ENCODE measurements at regions of chr20 and their contacts with region 1.

Region 1: GRCh38 chr20:34069341-34070078 is 42.5 kb downstream of the EIF2S2 start:
- DNase-seq: peak; percentile 86 to 91
- H3K4me3 ChIP-seq: no peak overlapping the region
- H3K4me3 Mint-ChIP-seq: no peak overlapping the region
- H3K27ac Mint-ChIP-seq: no peak overlapping the region
- H3K4me1 ChIP-seq: no peaks in the 10 kb centered on the region
- H3K4me1 Mint-ChIP-seq: no peaks in the 10 kb centered on the region
- H3K27me3 ChIP-seq: no peaks in the 10 kb centered on the region
- H3K27me3 Mint-ChIP-seq: no peaks in the 10 kb centered on the region
- CTCF ChIP-seq: peak; percentile 97 to 99

Region 2: GRCh38 chr20:33791959-33792597 is 277.4 kb before region 1 on chr20:
- CTCF ChIA-PET with region 1: interaction called, 7 read pairs
- POLR2A ChIA-PET with region 1: no interaction called
- intact Hi-C with region 1: loop called (anchors 1 kb)
- DNase-seq: peak in 1 of 2 experiments; percentile 77
- H3K4me3 ChIP-seq: no peak overlapping the region
- H3K4me3 Mint-ChIP-seq: no peak overlapping the region
- H3K27ac Mint-ChIP-seq: no peak overlapping the region
- H3K4me1 ChIP-seq: peaks cover 17% of the 10 kb centered on the region
- H3K4me1 Mint-ChIP-seq: peaks cover 18% of the 10 kb centered on the region
- H3K27me3 ChIP-seq: no peaks in the 10 kb centered on the region
- H3K27me3 Mint-ChIP-seq: no peaks in the 10 kb centered on the region
- CTCF ChIP-seq: peak; percentile 90 to 99

Region 3: GRCh38 chr20:33933469-33933909 is 136.0 kb before region 1 on chr20:
- CTCF ChIA-PET with region 1: interaction called, 12 read pairs
- POLR2A ChIA-PET with region 1: no interaction called
- intact Hi-C with region 1: loop called (anchors 1 kb)
- DNase-seq: peak; percentile 81 to 86
- H3K4me3 ChIP-seq: no peak overlapping the region
- H3K4me3 Mint-ChIP-seq: no peak overlapping the region
- H3K27ac Mint-ChIP-seq: no peak overlapping the region
- H3K4me1 ChIP-seq: no peaks in the 10 kb centered on the region
- H3K4me1 Mint-ChIP-seq: no peaks in the 10 kb centered on the region
- H3K27me3 ChIP-seq: no peaks in the 10 kb centered on the region
- H3K27me3 Mint-ChIP-seq: no peaks in the 10 kb centered on the region
- CTCF ChIP-seq: peak; percentile 56 to 88

Region 4: GRCh38 chr20:33984182-33984719 is 85.3 kb before region 1 on chr20:
- CTCF ChIA-PET with region 1: no interaction called
- POLR2A ChIA-PET with region 1: no interaction called
- intact Hi-C with region 1: no loop called
- DNase-seq: no peak
- H3K4me3 ChIP-seq: no peak overlapping the region
- H3K4me3 Mint-ChIP-seq: no peak overlapping the region
- H3K27ac Mint-ChIP-seq: no peak overlapping the region
- H3K4me1 ChIP-seq: no peaks in the 10 kb centered on the region
- H3K4me1 Mint-ChIP-seq: no peaks in the 10 kb centered on the region
- H3K27me3 ChIP-seq: no peaks in the 10 kb centered on the region
- H3K27me3 Mint-ChIP-seq: no peaks in the 10 kb centered on the region
- CTCF ChIP-seq: no peak

Region 5: DNA sequence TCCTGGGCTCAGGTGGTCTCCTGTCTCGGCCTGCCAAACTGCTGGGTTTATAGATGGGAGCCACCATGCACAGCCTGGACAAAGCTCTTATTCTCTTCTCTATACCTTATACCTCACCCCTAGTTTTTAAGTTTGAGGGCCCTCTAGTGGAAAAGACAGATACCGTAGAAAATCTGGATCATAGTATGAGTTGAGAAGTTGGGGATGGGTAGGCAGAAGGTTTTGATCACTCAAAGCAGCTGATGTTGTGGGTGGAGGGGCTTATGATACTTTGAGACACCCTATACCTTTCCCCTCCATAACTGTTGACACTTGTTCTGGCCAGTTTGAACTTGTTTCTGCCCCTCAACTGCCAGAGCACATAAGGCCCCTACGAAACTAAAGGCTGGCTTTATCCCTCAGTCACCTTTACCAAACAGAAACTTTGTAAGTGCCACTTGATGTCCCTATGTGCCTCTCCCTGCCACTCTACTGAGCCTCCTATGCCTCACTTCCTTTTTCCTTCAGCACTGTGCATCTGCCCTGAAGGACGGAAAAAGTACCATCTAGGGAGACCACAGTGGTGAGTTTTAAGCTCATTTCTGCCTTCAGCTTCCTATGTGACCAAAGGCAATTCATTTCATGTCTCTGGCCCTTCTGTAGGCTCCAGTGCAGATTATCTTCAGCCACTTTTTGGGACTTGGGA is 47.2 kb before region 1 on chr20:
- CTCF ChIA-PET with region 1: interaction called, 7 read pairs
- POLR2A ChIA-PET with region 1: no interaction called
- intact Hi-C with region 1: loop called (anchors 2 kb)
- DNase-seq: peak in 1 of 2 experiments; percentile 65
- H3K4me3 ChIP-seq: no peak overlapping the region
- H3K4me3 Mint-ChIP-seq: no peak overlapping the region
- H3K27ac Mint-ChIP-seq: no peak overlapping the region
- H3K4me1 ChIP-seq: no peaks in the 10 kb centered on the region
- H3K4me1 Mint-ChIP-seq: peaks cover 14% of the 10 kb centered on the region
- H3K27me3 ChIP-seq: no peaks in the 10 kb centered on the region
- H3K27me3 Mint-ChIP-seq: no peaks in the 10 kb centered on the region
- CTCF ChIP-seq: peak; percentile 51 to 72

Region 6: DNA sequence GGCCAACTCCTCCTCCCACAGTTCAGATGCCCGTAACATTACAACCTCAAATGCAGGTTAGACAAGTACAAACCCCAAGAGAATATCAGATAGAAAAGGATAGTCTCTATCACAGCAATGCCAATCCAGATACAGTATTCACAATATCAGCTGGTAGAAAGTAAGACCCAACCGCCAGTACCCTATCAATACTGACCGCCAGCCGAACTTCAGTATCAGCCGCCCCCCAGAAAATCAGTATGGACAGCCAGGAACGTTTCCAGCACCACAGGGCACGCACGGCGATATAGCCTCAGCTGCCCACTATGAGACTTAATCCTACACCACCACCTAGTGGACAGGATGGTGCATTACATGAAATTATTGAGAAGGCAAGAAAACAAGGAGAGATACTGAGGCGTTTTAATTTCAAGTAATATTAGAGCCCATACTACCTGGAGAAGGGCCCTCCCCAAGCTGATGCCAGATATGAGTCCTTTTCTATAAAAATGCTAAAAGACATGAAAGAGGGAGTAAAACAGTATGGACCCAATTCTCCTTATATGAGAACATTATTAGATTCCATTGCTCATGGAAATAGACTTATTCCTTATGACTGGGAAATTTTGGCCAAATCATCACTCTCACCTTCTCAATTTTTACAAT is 60.1 kb after region 1 on chr20:
- CTCF ChIA-PET with region 1: interaction called, 12 read pairs
- POLR2A ChIA-PET with region 1: no interaction called
- intact Hi-C with region 1: loop called (anchors 1 kb)
- DNase-seq: peak; percentile 83 to 91
- H3K4me3 ChIP-seq: peak overlapping the region; percentile 7; the same call in 1 of the 2 replicates
- H3K4me3 Mint-ChIP-seq: peak overlapping the region; percentile 41
- H3K27ac Mint-ChIP-seq: no peak overlapping the region
- H3K4me1 ChIP-seq: peaks cover 20% of the 10 kb centered on the region
- H3K4me1 Mint-ChIP-seq: peaks cover 26% of the 10 kb centered on the region
- H3K27me3 ChIP-seq: no peaks in the 10 kb centered on the region
- H3K27me3 Mint-ChIP-seq: peaks cover 3% of the 10 kb centered on the region
- CTCF ChIP-seq: peak; percentile 96 to 98

Region 7: DNA sequence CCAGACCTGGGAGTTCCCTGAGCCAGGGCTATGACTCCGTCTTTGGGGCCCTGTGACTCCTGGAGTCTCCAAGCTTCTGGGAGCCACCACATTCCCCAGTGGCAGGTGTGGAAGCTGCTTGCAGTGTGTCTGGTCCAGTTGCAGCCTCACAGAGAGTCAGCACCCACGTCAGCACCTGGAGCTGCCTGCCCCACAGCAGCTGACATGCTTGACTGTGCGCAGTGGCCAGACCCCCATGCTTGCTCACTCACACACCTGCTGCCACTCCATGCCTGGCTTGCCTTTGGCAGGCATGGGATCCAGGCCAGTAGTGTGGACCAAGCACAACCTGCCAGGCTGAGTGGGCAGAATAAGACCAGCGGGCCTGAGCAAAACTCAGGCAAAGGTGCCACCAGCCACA is 140.8 kb after region 1 on chr20:
- CTCF ChIA-PET with region 1: no interaction called
- POLR2A ChIA-PET with region 1: no interaction called
- intact Hi-C with region 1: no loop called
- DNase-seq: no peak
- H3K4me3 ChIP-seq: no peak overlapping the region
- H3K4me3 Mint-ChIP-seq: no peak overlapping the region
- H3K27ac Mint-ChIP-seq: no peak overlapping the region
- H3K4me1 ChIP-seq: no peaks in the 10 kb centered on the region
- H3K4me1 Mint-ChIP-seq: no peaks in the 10 kb centered on the region
- H3K27me3 ChIP-seq: no peaks in the 10 kb centered on the region
- H3K27me3 Mint-ChIP-seq: no peaks in the 10 kb centered on the region
- CTCF ChIP-seq: no peak

Measured in Caco-2 (cell line).